ENCODE measurements at regions of chr13 and their contacts with region 1.

Region 1: DNA sequence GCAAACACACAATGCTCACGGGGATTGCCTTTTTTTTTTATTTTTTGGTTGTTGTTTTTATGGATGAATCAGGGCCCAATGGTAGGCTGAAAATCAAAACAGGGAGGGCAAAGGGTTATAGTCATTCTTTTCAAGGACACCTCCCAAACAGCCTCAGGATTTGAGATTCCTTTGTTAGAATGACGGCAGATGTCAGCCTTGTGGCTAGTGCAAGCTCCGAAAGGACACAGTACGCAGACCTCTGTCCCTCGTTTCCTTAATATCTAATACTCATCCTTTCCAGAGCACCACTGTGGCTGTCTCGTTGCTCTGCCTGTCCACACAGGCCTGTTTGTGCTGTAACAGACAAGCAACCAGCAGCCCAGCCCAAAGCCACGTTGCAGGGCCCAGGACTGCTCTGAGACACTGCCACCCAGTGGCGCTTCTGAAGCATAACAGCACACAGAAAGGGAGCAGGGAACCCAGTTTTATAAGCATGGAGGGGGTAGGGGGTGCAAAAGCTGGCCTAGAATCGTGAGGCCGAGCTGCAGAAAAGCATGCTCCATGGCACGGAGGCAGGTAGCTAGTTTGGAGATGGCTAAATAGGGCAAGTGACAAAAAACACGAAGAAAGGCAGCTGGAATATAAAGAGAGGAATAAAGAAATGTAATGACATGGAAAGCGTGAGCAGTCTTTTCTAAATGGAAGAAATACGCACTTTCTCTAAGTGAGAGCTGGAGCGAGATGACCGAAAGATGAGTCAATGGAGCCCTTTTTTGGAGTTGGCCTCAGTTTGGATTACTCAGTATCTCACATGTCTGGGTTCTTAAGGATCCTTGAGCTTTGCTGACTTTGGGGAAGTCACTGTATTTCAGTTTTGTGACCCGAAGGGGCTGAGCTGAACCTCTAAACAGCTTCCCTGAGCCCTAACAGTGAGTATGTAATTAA is 40.7 kb upstream of the MEDAG start:
- DNase-seq: peak; percentile 80
- ATAC-seq: peak; percentile 97
- H3K4me3 ChIP-seq: peak overlapping the region in 2 of 3 experiments; percentile 40 to 54; a peak in 3 of 6 replicates
- H3K27ac ChIP-seq: peak overlapping the region; percentile 7
- H3K4me1 ChIP-seq: peaks cover 64% of the 10 kb centered on the region
- H3K27me3 ChIP-seq: no peaks in the 10 kb centered on the region; a peak in 1 of 5 replicates
- CTCF ChIP-seq: peak; percentile 97
- EP300 ChIP-seq: no peak
- POLR2A ChIP-seq: peak in 1 of 2 experiments; percentile 21; a peak in 1 of 4 replicates
- RAD21 ChIP-seq: peak; percentile 93

Region 2: DNA sequence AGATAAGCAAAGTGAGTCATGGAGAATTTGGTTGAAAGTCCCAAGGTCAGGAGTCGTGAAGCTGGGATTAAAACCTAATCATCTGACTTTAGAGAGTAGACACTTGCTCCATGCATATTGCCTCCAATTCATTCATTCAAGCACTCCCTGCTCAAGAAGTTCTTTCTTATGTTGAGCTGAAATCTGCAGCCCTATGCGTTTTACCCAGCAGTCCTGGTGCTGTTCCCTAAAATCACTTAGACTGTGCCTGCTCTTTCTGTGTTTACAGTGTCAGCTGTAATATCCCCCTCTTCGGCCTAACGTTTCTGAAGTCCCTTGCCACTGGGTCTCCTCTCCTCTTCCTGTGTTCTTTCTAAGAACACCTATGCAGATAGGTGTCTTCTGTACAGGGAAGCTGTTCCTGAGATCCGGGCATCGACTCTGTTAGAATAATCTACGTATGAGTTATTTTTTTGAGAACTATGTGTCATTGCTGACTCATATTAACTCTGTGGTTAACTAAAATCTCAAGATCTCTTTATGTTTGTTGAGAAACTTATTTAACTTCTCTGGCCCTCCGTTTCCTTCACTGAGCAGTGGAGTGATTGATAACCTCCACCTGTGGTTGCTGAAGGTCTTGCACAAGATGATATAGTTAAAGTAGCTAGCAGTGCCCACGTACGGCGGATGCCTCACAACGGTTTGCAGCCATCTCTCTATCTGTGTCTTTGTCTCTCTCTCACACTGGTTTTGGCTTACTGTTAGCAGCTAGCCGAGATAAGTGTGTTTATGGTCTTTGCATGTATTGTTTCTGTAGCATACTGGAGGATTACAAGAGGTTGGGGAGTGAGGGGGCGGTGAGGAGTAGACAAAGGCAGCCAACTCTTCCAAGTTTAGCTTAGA is 125.4 kb before region 1 on chr13:
- CTCF ChIA-PET with region 1: no interaction called
- POLR2A ChIA-PET with region 1: no interaction called
- in situ Hi-C with region 1: loop called (anchors 5 kb)
- intact Hi-C with region 1: no loop called
- DNase-seq: no peak
- ATAC-seq: no peak
- H3K4me3 ChIP-seq: no peak overlapping the region
- H3K27ac ChIP-seq: no peak overlapping the region
- H3K4me1 ChIP-seq: peaks cover 49% of the 10 kb centered on the region
- H3K27me3 ChIP-seq: peaks cover 1 to 7% of the 10 kb centered on the region in 2 experiments; a peak in 1 of 5 replicates
- CTCF ChIP-seq: no peak
- EP300 ChIP-seq: no peak
- POLR2A ChIP-seq: no peak
- RAD21 ChIP-seq: no peak

Measured in HepG2 (cell line).